ENCODE measurements at regions of chr3 and their contacts with region 1.

Region 1: GRCh38 chr3:187319699-187320302 is 28.3 kb upstream of the MASP1 start:
- DNase-seq: no peak
- H3K4me3 ChIP-seq: no peak overlapping the region
- CTCF ChIP-seq: peak; percentile 86

Region 2: GRCh38 chr3:187139126-187139894 is 180.5 kb before region 1 on chr3 and contains the start of gene RPL39L:
- CTCF ChIA-PET with region 1: interaction called, 25 read pairs
- POLR2A ChIA-PET with region 1: no interaction called
- DNase-seq: peak; percentile 21
- H3K4me3 ChIP-seq: peak within 1 kb of the TSS; percentile 81
- CTCF ChIP-seq: peak; percentile 97

Region 3: DNA sequence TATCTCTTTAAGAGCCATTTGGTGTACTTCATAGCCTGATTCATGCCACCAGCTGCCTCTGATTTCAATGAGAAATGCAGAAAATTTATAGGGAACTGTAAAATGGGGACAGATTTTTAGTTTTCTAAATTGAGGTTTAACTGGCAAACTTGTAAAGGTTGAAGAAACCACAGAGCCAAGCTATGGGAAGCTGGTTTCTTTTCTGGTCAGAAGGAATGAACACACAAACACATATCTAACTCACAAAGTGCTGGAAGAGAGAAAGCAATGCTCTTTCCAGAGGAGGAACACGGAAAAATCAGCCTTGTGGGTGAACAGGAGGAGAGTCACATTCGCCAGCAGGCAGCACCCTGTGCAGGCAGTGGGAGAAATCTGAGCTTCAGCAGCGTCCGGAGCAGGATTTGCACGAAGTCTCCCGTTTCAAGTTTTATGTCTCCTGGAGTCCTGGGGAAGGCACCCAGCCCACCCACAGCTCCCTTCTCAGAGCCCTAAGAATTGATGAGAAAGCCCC is 28.7 kb before region 1 on chr3:
- CTCF ChIA-PET with region 1: interaction called, 95 read pairs
- POLR2A ChIA-PET with region 1: no interaction called
- DNase-seq: no peak
- H3K4me3 ChIP-seq: peak overlapping the region; percentile 62
- CTCF ChIP-seq: no peak

Region 4: GRCh38 chr3:187567661-187568121 is 247.9 kb after region 1 on chr3:
- CTCF ChIA-PET with region 1: interaction called, 58 read pairs
- POLR2A ChIA-PET with region 1: no interaction called
- DNase-seq: peak; percentile 76
- H3K4me3 ChIP-seq: no peak overlapping the region
- CTCF ChIP-seq: no peak

Region 5: DNA sequence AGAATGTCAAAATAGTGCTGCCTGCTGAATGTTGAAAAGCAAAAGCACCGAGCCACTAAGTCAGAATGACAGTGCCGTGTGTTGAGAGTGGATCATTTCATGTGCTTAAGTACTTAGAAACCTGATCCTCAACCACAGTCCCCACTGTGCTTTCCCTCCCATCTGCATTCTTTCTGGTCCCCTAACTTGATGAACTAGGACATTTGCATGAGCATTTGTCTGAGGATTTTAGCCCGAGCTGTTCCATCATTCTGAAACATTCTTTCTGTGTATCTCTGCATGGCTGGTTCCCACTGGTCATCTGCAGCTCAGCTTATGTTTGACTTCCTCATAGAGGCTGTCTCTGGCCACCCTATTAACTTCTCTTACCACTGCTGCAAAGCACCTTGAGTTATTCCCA is 308.4 kb after region 1 on chr3:
- CTCF ChIA-PET with region 1: interaction called, 18 read pairs
- POLR2A ChIA-PET with region 1: no interaction called
- DNase-seq: no peak
- H3K4me3 ChIP-seq: no peak overlapping the region
- CTCF ChIP-seq: no peak

Region 6: GRCh38 chr3:187694801-187695200 is 375.0 kb after region 1 on chr3:
- CTCF ChIA-PET with region 1: interaction called, 1,530 read pairs
- POLR2A ChIA-PET with region 1: no interaction called
- DNase-seq: no peak
- H3K4me3 ChIP-seq: no peak overlapping the region
- CTCF ChIP-seq: no peak

Measured in AG04449 (cell line).